Activated CD8-positive, alpha-beta T cell treated with anti-CD3 and anti-CD28 coated beads, Interleukin-2, amount 10 ng/mL, durations not matched to agents 7 days and 5 days (primary cell): ENCODE measurements at regions of chr11 and their contacts with region 1.

Region 1: GRCh38 chr11:76919887-76920746 is 59.4 kb downstream of the ACER3 start:
- DNase-seq: peak; percentile 83
- ATAC-seq: peak; percentile 83
- H3K4me3 Mint-ChIP-seq: no peak overlapping the region
- H3K27ac Mint-ChIP-seq: no peak overlapping the region
- H3K4me1 Mint-ChIP-seq: peaks cover 6% of the 10 kb centered on the region
- H3K27me3 Mint-ChIP-seq: peaks cover 4% of the 10 kb centered on the region

Region 2: DNA sequence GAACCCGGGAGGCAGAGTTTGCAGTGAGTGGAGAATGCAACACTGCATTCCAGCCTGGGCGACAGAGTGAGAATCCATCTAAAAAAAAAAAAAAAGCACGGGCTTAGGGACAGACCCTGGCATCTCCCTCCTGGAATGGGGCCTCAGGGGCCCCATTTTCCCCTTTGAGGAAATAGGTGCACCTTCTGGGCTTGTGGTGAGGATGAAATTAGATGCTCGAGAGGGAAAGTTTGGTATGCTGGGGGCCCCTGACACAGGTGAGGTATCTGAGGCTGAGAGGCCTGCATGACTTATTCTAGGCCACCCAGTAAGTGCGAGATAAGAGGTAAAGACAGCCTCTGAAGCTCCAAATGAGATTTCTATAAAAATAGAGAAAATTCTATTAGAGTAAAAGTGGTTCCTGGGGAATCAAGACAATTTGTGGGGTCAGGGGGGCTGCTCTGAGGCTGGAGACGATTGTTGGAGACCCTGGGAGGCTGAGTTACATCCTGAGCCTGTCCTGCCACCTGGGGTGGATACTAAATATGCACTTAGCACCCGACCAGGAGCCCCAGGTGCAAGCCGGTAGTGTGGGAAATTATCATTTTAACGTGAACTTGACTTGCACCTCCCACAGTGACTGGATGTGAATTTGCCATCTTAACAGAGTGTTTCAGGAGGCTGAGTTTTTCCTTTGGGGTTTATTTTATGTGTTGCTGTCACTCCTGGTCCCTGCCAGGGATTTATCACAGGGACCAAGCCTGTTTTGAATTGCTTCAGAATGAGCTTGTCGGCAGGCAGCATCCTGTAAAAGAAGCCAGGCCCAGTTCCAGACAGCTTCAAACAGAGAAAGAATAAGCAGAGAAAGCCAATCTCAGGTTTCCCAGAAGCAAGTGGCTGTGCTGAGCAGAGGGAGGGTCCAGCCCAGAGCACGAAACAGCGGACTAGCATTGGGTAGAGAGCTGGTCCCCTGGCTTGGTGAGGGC is 185.4 kb before region 1 on chr11:
- CTCF ChIA-PET with region 1: interaction called, 50 read pairs
- POLR2A ChIA-PET with region 1: no interaction called
- DNase-seq: no peak
- ATAC-seq: no peak
- H3K4me3 Mint-ChIP-seq: no peak overlapping the region
- H3K27ac Mint-ChIP-seq: no peak overlapping the region
- H3K4me1 Mint-ChIP-seq: peaks cover 6% of the 10 kb centered on the region
- H3K27me3 Mint-ChIP-seq: peaks cover 6% of the 10 kb centered on the region

Region 3: DNA sequence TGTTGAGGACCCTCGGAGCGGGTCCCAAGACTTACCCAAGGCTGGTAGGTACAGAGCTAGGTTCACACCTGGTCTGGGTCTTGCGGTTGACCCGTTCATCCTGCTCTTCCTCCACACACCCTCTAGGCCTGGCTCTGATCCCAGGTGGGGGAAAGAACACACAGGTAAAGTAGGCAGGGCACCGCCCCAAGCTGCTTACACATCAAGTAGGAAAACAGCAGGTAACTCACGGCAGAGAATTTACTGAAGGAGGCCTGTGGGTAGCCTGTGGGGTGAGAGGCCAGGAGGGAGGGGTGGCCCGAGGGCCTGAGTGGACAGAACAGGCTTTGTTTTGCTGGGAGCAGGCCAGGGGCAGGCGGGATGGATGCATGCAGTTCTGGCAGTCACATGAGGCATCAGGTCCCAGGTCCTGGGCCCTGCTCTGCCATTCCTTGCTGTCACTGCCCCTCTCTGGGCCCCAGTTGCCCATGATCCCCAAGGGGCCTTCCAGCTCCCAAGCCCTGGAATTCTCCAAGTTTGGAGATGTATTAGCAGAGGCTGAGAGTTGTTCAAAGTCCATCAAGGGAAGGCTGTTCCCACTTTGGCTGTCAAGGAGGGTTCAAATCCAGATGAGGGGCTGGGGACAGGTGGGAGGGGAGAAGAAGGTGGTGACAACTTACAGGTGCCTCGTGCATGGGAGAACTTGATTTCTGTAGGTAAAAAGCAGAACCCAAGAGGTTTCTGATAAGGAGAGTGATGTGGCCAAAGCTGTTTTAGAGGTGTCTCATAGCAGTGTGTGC is 131.3 kb before region 1 on chr11:
- CTCF ChIA-PET with region 1: no interaction called
- POLR2A ChIA-PET with region 1: no interaction called
- DNase-seq: no peak
- ATAC-seq: no peak
- H3K4me3 Mint-ChIP-seq: no peak overlapping the region
- H3K27ac Mint-ChIP-seq: no peak overlapping the region
- H3K4me1 Mint-ChIP-seq: no peaks in the 10 kb centered on the region
- H3K27me3 Mint-ChIP-seq: peaks cover 33% of the 10 kb centered on the region

Region 4: GRCh38 chr11:76835928-76836612 is 84.0 kb before region 1 on chr11:
- CTCF ChIA-PET with region 1: no interaction called
- POLR2A ChIA-PET with region 1: no interaction called
- DNase-seq: no peak
- ATAC-seq: no peak
- H3K4me3 Mint-ChIP-seq: no peak overlapping the region
- H3K27ac Mint-ChIP-seq: no peak overlapping the region
- H3K4me1 Mint-ChIP-seq: no peaks in the 10 kb centered on the region
- H3K27me3 Mint-ChIP-seq: peaks cover 17% of the 10 kb centered on the region

Region 5: GRCh38 chr11:76850815-76851214 is 69.3 kb before region 1 on chr11:
- CTCF ChIA-PET with region 1: interaction called, 12 read pairs
- POLR2A ChIA-PET with region 1: no interaction called
- DNase-seq: no peak
- ATAC-seq: no peak
- H3K4me3 Mint-ChIP-seq: no peak overlapping the region
- H3K27ac Mint-ChIP-seq: no peak overlapping the region
- H3K4me1 Mint-ChIP-seq: no peaks in the 10 kb centered on the region
- H3K27me3 Mint-ChIP-seq: peaks cover 17% of the 10 kb centered on the region

Region 6: DNA sequence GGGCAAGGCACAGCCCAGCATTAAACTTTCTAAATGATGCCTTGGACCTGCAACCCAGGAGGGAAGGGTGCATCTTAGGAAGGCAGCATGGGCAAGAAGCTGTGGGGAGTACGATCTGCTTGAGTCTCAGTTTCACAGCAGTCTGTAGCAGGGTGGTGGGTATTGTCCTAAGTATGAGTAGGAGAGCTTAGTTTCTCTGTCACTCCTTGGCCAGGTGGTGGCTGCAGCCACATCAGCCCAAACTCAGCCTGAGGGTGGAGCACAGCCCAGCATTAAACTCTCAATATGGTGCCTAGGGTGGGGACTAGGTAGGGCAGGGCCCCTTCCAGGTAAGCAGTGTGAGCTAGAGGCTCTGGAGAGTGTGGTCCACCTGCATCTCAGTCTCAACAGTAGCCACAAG is 26.1 kb after region 1 on chr11:
- CTCF ChIA-PET with region 1: interaction called, 23 read pairs
- POLR2A ChIA-PET with region 1: no interaction called
- DNase-seq: no peak
- ATAC-seq: no peak
- H3K4me3 Mint-ChIP-seq: no peak overlapping the region
- H3K27ac Mint-ChIP-seq: no peak overlapping the region
- H3K4me1 Mint-ChIP-seq: peaks cover 10% of the 10 kb centered on the region
- H3K27me3 Mint-ChIP-seq: peaks cover 6% of the 10 kb centered on the region

Region 7: DNA sequence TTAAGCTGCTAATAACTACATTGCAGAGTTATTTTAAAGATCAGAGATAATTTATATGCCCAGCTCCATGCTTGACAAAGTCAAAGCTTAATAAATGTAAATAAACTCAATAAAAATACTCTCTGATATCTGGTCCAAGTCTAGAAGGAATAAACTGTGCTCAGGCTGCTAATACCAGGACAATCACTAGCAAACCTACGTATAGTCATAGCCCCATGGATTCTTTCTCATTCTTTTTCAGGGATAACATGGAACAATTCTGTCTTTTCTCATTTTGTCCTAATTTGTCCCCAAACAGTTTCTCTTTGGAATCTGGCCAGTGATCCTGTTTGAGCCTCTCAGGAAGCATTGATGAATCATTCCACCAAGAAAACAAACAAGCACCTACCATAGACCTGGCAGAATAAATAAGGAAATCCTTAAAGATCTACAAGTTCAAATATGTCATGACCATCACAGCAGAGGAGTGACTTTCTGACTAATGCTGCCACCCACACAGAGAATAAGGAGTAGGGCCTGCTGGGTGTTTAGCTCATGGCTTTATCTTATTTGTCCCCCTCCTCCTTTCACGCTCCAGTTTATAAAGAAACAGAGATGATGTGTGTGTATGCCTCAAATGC is 100.0 kb after region 1 on chr11:
- CTCF ChIA-PET with region 1: interaction called, 19 read pairs
- POLR2A ChIA-PET with region 1: no interaction called
- DNase-seq: no peak
- ATAC-seq: no peak
- H3K4me3 Mint-ChIP-seq: no peak overlapping the region
- H3K27ac Mint-ChIP-seq: no peak overlapping the region
- H3K4me1 Mint-ChIP-seq: no peaks in the 10 kb centered on the region
- H3K27me3 Mint-ChIP-seq: no peaks in the 10 kb centered on the region

Region 8: DNA sequence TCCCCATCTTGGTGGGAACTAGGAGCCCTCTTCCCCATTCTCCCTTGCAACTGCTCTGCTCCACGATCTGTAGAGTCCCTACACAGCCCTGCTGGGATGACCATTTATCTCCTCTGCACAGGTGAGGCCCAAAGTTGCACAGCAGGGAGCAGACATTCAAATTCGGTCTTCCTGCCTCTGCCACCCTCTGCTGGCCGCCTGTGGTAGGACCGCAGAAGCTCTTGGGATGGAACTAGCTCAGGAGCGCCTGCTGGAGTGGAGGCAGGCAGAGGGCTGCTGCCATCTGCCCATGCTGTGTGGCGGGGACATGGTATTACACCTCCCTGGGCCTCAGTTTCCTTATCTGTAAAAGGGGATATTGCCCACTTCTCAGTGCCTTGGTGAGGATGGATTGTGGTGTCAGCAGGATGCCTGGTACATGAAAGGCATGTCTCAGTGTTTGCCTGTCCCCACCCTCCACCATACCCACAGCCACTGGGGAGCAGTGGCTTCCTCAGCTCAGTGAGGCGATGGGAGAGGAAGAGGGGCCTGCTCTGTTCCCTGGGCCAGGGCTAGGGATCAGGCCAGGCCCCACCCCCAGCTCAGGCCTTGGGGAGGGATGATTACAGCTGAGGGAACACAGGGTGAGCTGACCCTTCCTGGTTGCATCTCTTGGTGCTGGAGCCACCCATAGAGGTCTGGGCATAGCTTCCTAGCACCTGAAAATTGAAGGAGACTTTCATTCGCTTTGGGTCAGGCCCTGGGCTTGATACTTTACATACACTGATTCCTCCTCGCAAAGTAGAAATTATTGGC is 171.2 kb after region 1 on chr11:
- CTCF ChIA-PET with region 1: interaction called, 48 read pairs
- POLR2A ChIA-PET with region 1: no interaction called
- DNase-seq: peak; percentile 88
- ATAC-seq: peak; percentile 93
- H3K4me3 Mint-ChIP-seq: no peak overlapping the region
- H3K27ac Mint-ChIP-seq: no peak overlapping the region
- H3K4me1 Mint-ChIP-seq: peaks cover 7% of the 10 kb centered on the region
- H3K27me3 Mint-ChIP-seq: no peaks in the 10 kb centered on the region

Region 9: GRCh38 chr11:77181226-77181625 is 261.1 kb after region 1 on chr11:
- CTCF ChIA-PET with region 1: no interaction called
- POLR2A ChIA-PET with region 1: no interaction called
- DNase-seq: no peak
- ATAC-seq: no peak
- H3K4me3 Mint-ChIP-seq: no peak overlapping the region
- H3K27ac Mint-ChIP-seq: no peak overlapping the region
- H3K4me1 Mint-ChIP-seq: no peaks in the 10 kb centered on the region
- H3K27me3 Mint-ChIP-seq: no peaks in the 10 kb centered on the region